A673 (cell line): ENCODE measurements at regions of chr5 and their contacts with region 1.

Region 1: DNA sequence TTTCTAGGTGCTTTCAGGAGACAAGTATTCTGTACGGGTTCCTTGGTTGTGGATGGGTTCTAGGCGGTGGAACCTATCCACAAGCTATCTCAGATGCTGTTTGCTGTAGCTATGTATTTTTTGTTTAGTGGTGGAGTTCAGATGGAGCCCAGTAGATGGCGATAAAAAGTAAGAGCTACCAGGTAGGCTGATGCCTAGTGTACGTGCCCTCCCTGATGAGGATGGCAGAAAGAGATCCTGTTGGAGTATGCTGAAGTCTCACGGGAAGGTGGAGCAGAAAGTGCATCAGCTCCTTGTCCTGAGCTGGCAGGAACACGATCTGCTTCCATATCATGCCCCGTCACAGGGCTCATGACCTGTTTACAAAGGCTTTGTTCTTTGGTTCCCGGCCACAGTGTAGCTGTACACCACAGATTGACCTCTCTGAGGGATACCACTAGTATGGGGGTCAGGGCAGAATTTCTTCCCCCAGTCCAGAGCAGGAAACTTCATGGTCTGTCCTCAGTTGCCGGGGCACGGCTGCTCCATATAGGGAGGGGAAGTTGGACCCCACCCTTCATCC is 12.6 kb upstream of the UGT3A2 start:
- DNase-seq: peak; percentile 86
- H3K4me3 ChIP-seq: no peak overlapping the region
- H3K27ac ChIP-seq: no peak overlapping the region
- H3K4me1 ChIP-seq: peaks cover 17% of the 10 kb centered on the region
- H3K27me3 ChIP-seq: no peaks in the 10 kb centered on the region
- CTCF ChIP-seq: peak; percentile 82

Region 2: DNA sequence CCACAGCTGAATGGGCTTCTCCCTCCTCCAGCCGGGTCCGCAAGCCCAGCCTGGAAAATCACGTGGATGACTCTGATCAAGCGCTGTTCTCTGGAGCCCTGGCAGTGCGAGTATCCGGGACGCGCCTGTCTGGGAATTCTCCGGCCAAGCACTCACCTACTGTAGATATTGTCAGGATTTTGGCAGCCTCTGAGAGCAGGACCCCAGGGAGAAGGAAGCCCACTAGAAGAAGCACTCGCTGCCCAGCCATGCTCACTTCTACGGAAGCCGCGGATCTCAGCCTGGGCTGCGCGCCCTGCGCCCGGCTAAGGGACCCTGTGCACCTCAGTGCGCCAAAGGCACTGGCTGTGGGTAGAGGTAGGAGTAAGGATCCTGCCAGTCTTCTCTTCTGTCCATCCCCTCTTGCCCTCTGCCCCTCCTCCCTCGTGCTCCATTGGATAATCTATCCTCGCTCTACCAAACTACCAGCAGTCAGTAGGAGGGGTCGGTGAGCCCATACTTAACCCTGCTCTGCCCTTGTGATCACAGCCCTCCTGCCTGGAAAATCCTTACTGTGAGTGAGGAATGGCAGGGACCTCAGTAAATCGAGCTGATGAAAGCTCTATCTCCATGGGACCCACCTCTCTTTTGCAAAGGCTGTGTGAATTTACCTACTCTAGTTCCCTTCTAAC is 12.6 kb before region 1 on chr5 and contains the start of gene UGT3A2:
- CTCF ChIA-PET with region 1: interaction called, 15 read pairs
- POLR2A ChIA-PET with region 1: interaction called, 11 read pairs
- intact Hi-C with region 1: no loop called
- DNase-seq: peak; percentile 92
- H3K4me3 ChIP-seq: peak within 1 kb of the TSS; percentile 87
- H3K27ac ChIP-seq: peak within 1 kb of the TSS; percentile 97
- H3K4me1 ChIP-seq: peaks cover 33% of the 10 kb centered on the region
- H3K27me3 ChIP-seq: no peaks in the 10 kb centered on the region
- CTCF ChIP-seq: no peak
- total RNA-seq, gene UGT3A2: 528 and 529 TPM in 2 replicates

Region 3: DNA sequence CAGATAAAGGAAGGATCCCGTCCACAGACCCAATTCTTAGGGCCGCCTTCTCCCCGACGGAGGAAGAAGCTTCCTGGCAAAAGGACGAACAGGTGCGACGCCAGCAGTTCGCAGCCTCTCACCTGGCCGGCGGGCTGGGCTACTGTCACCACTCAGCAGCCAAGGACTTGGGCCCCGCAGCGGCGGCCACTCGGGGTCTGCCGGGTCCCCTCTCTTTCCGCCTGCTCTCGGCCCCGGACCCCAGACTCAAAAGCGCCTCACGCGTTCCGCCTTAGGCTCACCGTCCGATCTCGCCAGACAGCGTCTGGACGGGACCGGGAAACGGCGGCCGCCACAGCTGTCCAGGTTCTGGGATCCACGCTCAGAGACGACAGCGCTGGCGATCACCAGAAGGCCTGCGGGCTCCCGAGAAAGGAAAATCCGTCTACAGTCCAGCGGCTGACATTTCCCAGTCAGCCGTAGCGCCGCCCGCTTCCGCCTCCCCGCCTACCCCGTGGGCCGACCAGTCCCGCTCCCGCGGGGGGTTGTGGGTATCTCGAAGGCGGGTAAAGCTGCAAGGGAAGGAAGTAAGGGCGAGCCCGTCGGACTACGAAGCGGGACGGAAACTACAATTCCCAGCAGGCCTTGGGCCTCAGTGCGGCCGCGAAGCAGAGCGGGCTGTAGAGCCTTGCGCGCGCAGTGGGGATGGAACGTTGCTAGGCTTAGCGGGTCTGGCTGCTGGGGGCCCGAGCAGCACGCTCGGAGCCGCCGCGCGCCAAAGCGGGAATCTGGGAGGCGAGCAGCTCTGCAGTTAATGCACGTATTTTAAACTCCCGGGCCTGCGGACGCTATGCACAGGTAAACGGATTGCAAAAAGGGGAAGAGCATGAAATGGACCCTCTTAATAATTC is 72.4 kb after region 1 on chr5 and contains the starts of genes LMBRD2 and SKP2:
- CTCF ChIA-PET with region 1: interaction called, 4 read pairs
- POLR2A ChIA-PET with region 1: interaction called, 4 read pairs
- intact Hi-C with region 1: loop called (anchors 5 kb)
- DNase-seq: peak; percentile 100
- H3K4me3 ChIP-seq: peak within 1 kb of the TSS; percentile 91
- H3K27ac ChIP-seq: peak within 1 kb of the TSS; percentile 81
- H3K4me1 ChIP-seq: peaks cover 29% of the 10 kb centered on the region
- H3K27me3 ChIP-seq: no peaks in the 10 kb centered on the region
- CTCF ChIP-seq: no peak
- total RNA-seq, gene LMBRD2: 6.4 and 8.4 TPM in 2 replicates
- total RNA-seq, gene SKP2: 133 and 154 TPM in 2 replicates

Region 4: DNA sequence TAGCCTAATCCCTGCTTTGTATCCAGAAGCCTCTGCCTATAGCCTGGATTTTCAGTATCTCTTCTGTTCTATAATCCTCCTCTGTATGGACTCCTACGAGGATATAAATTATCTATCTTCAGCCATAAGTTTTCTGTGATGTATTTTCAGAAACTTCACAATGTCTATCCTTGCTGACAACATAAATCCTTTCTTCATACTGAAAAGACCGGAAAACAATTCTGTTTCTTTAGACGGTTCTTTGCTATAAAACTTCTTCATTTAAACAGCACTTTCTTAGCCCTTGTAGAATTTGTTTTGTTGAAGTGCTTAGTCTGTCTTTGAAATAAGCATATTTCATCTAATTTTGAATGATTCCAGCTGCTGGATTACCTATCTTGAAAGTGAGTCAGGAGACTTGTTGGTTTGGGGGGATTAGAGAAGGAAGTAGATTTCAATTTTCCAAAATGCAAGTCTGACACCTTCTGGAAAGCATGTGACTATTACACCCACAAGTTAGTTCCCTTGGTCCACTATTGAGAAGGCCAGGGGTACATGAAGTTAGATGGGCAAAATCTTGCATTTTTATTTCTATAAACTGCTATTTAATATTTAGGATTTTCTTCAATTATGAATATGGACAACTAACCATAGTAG is 318.7 kb after region 1 on chr5:
- CTCF ChIA-PET with region 1: interaction called, 4 read pairs
- POLR2A ChIA-PET with region 1: no interaction called
- intact Hi-C with region 1: loop called (anchors 5 kb)
- DNase-seq: peak; percentile 72
- H3K4me3 ChIP-seq: no peak overlapping the region
- H3K27ac ChIP-seq: no peak overlapping the region
- H3K4me1 ChIP-seq: peaks cover 24% of the 10 kb centered on the region
- H3K27me3 ChIP-seq: no peaks in the 10 kb centered on the region
- CTCF ChIP-seq: peak; percentile 61

Region 5: DNA sequence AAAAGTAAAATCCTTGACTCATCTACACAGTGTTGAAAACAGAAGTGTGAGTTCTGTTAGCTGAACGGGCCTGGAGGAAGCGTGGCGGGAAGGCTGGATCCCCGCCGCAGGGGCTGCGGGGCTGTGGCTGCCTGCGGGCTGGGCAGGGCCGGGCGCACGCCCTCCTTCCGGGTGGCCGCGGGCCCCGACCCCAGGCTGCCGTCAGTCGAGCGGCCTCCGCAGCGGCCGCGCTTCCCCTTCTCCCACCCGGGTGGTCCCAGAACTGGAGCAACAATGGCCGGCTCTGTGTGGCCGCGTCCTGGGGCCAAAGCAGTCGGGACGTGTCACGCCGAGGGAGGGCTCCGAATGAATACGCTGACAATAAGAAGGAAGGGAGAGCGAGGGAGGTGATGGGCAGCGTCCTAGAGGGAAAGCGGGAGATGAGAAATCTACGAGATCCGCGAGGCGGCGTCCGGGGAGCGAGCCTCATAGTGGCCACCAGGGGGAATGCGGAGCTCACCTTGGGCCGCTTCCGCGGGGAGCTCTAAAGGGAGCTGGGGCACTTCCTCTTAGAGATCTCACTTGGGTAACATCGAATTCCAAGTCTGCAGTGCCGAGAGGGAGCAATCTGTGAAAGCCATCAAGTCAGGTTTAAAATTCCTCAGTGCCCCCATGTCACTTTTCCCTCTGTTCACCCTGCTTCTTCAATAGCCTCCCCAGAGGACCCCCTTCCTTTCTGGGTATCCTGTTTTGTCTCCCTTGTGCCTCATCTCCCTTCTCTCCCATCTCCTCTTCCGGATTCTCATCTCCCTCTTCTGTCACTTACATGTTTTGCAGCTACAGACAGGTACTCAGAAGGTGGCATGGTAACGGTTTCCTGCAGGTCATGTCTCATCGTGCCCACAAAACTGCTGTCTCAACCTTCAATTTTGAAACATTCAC is 611.0 kb after region 1 on chr5:
- CTCF ChIA-PET with region 1: interaction called, 10 read pairs
- POLR2A ChIA-PET with region 1: no interaction called
- intact Hi-C with region 1: loop called (anchors 5 kb)
- DNase-seq: peak; percentile 90
- H3K4me3 ChIP-seq: peak overlapping the region; percentile 57
- H3K27ac ChIP-seq: peak overlapping the region; percentile 60
- H3K4me1 ChIP-seq: peaks cover 9% of the 10 kb centered on the region
- H3K27me3 ChIP-seq: no peaks in the 10 kb centered on the region
- CTCF ChIP-seq: peak; percentile 84